AG04450 (cell line): ENCODE measurements at regions of chr17 and their contacts with region 1.

Region 1: DNA sequence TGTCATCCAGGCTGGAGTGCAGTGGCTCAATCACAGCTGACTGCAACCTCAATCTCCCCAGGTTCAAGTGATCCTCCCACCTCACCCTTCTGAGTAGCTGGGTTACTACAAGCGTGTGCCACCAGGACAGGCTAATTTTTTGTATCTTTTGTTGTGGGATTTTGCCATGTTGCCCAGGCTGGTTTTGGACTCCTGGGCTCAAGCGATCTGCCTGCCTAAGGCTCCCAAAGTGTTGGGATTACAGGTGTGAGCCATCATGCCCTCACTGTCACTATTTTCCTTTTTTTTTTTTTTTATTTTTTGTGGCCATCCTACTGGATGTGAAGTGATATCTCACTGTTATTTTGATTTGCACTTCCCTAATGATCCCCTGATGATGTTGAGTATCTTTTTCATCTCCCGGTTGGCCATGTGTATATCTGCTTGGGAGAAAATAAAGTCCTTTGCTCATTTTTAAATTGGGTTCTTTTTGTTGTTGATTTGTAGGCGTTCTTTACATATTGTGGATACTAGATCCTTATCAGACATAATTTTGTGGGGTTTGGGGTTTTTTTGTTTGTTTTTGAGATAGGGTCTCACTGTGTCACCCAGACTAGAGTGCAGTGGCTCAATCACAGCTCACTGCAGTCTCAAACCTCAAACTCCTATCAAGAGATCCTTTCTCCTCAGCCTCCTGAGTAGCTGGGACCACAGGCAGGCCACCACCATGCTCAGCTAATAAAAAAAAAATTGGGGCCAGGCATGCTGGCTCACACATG is 5.0 kb downstream of the ACTG1 start:
- DNase-seq: no peak
- H3K4me3 ChIP-seq: no peak overlapping the region
- H3K27ac ChIP-seq: no peak overlapping the region
- H3K27me3 ChIP-seq: no peaks in the 10 kb centered on the region
- CTCF ChIP-seq: no peak

Region 2: GRCh38 chr17:81821603-81822311 is 314.1 kb after region 1 on chr17:
- CTCF ChIA-PET with region 1: no interaction called
- POLR2A ChIA-PET with region 1: no interaction called
- DNase-seq: no peak
- H3K4me3 ChIP-seq: no peak overlapping the region
- H3K27ac ChIP-seq: no peak overlapping the region
- H3K27me3 ChIP-seq: peaks cover 2% of the 10 kb centered on the region
- CTCF ChIP-seq: peak; percentile 63

Region 3: GRCh38 chr17:82145550-82146190 is 638.1 kb after region 1 on chr17:
- CTCF ChIA-PET with region 1: no interaction called
- POLR2A ChIA-PET with region 1: interaction called, 10 read pairs
- DNase-seq: no peak
- H3K4me3 ChIP-seq: no peak overlapping the region
- H3K27ac ChIP-seq: no peak overlapping the region
- H3K27me3 ChIP-seq: no peaks in the 10 kb centered on the region
- CTCF ChIP-seq: no peak